Heart left ventricle (tissue), 16 donors: ENCODE measurements at regions of chr1 and their contacts with region 1.

Region 1: DNA sequence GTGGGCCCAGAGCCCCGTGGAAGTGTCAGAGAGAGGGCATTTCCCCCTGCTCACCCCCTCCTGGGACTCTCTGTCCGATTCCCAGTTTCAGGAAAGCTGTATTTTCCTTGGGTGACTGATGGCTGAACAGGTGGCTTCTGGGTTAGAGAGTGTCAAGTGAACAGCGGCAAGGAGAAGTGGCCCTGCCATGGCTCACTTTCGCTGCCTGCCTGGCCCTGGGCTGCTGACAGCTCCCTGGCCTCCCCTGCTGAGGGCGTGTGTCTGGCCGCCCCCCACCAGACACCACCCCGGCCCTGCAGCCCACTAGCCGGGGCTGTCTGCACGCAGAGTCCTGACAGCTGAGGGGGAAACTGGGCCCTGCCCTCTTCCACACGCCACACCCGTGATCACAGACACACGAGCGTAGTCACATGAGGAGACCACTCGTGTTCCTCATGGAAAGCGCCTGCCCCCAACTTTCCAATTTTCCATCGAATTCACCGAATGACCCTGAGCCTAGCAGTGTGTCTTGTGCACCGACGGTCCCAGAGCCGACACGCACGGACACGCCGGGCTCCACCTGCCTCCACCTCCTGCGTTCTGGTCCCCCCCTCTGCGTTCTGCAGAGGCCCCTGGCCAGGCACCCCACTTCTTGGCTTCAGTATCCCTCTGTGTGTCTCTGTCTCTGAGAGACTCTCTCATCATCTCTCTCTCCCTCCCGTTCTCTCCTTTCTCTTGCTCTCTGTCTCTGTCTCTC is 60.6 kb upstream of the CASZ1 start:
- DNase-seq: peak in 1 of 5 donors; percentile 25
- ATAC-seq: peak in 2 of 4 donors; percentile 17 to 27
- H3K4me3 ChIP-seq: no peak overlapping the region
- H3K27ac ChIP-seq: peak overlapping the region in 9 of 12 donors; percentile 15 to 92 (median 78)
- H3K4me1 ChIP-seq: peaks cover 0 to 42% (median 10%) of the 10 kb centered on the region in 12 donors
- H3K27me3 ChIP-seq: peaks cover 0 to 21% (median 0%) of the 10 kb centered on the region in 9 donors
- CTCF ChIP-seq: no peak
- POLR2A ChIP-seq: no peak

Region 2: GRCh38 chr1:10824821-10825423 is 32.1 kb before region 1 on chr1:
- intact Hi-C with region 1: loop called in 2 of 10 experiments (anchors 5 kb)
- DNase-seq: no peak
- ATAC-seq: no peak
- H3K4me3 ChIP-seq: no peak overlapping the region
- H3K27ac ChIP-seq: no peak overlapping the region
- H3K4me1 ChIP-seq: peaks cover 0 to 32% (median 9%) of the 10 kb centered on the region in 12 donors
- H3K27me3 ChIP-seq: peaks cover 0 to 10% (median 0%) of the 10 kb centered on the region in 9 donors
- CTCF ChIP-seq: no peak
- POLR2A ChIP-seq: no peak